Activated CD4-positive, alpha-beta T cell treated with anti-CD3 and anti-CD28 coated beads for 36 hours (primary cell): ENCODE measurements at regions of chr19 and their contacts with region 1.

Region 1: GRCh38 chr19:48993175-48994034 is at the starts of genes GYS1 and RUVBL2:
- DNase-seq: peak; percentile 100
- ATAC-seq: peak; percentile 95
- H3K4me3 Mint-ChIP-seq: peak within 1 kb of the TSS; percentile 100
- H3K27ac Mint-ChIP-seq: peak within 1 kb of the TSS; percentile 97
- H3K4me1 Mint-ChIP-seq: peaks cover 41% of the 10 kb centered on the region
- H3K27me3 Mint-ChIP-seq: no peaks in the 10 kb centered on the region
- total RNA-seq, gene GYS1: 80.2 to 102 TPM
- total RNA-seq, gene RUVBL2: 155 to 178 TPM

Region 2: DNA sequence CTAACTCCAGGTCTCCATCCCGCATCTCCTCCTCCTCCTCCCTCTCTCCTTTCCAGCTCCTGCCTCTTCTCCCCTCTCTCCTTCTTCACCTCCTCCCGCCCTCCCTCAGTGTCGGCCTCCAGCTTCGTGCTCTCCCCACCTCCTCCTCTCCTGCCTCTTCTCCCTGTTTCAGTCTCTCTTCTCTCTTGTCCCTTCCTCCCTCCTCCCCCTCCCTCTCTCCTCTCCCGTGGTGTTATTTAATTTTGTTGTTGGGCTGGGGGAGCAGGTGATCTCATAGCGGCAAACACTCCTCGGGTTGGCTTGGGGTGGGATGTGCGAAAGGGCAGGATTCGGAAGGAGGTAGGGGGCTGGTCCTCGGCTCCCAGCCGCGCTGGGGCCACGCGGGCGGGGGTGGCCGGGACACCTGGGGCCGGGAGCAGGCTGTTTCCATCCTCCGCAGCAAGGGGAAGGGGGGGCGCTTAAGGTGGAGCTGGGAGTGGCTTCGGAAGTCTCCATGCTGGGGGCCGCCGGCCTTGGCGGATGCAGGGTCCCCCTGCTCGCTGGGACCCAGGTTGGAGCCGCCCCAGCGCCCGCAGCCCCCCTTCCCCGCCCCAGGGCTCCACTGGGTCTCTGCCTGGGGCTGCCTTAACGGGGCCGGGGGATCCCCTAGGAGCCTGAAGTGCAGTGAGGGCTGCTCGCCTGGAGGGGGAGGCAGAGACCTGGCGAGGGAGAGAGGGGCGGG is 347.2 kb before region 1 on chr19 and contains the start of gene CA11:
- CTCF ChIA-PET with region 1: interaction called, 3 read pairs
- POLR2A ChIA-PET with region 1: interaction called, 4 read pairs
- intact Hi-C with region 1: loop called in 1 of 2 experiments (anchors 1 kb)
- DNase-seq: peak; percentile 96
- ATAC-seq: peak; percentile 85
- H3K4me3 Mint-ChIP-seq: peak within 1 kb of the TSS; percentile 79
- H3K27ac Mint-ChIP-seq: peak within 1 kb of the TSS; percentile 88
- H3K4me1 Mint-ChIP-seq: peaks cover 44% of the 10 kb centered on the region
- H3K27me3 Mint-ChIP-seq: no peaks in the 10 kb centered on the region
- total RNA-seq, gene CA11: 11.5 to 18.0 TPM

Region 3: GRCh38 chr19:48858984-48859710 is 134.3 kb before region 1 on chr19:
- CTCF ChIA-PET with region 1: no interaction called
- POLR2A ChIA-PET with region 1: no interaction called
- intact Hi-C with region 1: loop called in 1 of 2 experiments (anchors 1 kb)
- DNase-seq: peak; percentile 92
- ATAC-seq: peak; percentile 92
- H3K4me3 Mint-ChIP-seq: peak overlapping the region; percentile 94
- H3K27ac Mint-ChIP-seq: peak overlapping the region; percentile 93
- H3K4me1 Mint-ChIP-seq: peaks cover 7% of the 10 kb centered on the region
- H3K27me3 Mint-ChIP-seq: no peaks in the 10 kb centered on the region

Region 4: GRCh38 chr19:48965040-48965805 is 28.2 kb before region 1 on chr19 and contains the start of gene FTL:
- CTCF ChIA-PET with region 1: interaction called, 31 read pairs
- POLR2A ChIA-PET with region 1: interaction called, 10 read pairs
- intact Hi-C with region 1: loop called (anchors 1 to 2 kb)
- DNase-seq: peak; percentile 95
- ATAC-seq: peak; percentile 79
- H3K4me3 Mint-ChIP-seq: peak within 1 kb of the TSS; percentile 86
- H3K27ac Mint-ChIP-seq: peak within 1 kb of the TSS; percentile 90
- H3K4me1 Mint-ChIP-seq: peaks cover 53% of the 10 kb centered on the region
- H3K27me3 Mint-ChIP-seq: no peaks in the 10 kb centered on the region
- total RNA-seq, gene FTL: 809 to 1,111 TPM

Region 5: DNA sequence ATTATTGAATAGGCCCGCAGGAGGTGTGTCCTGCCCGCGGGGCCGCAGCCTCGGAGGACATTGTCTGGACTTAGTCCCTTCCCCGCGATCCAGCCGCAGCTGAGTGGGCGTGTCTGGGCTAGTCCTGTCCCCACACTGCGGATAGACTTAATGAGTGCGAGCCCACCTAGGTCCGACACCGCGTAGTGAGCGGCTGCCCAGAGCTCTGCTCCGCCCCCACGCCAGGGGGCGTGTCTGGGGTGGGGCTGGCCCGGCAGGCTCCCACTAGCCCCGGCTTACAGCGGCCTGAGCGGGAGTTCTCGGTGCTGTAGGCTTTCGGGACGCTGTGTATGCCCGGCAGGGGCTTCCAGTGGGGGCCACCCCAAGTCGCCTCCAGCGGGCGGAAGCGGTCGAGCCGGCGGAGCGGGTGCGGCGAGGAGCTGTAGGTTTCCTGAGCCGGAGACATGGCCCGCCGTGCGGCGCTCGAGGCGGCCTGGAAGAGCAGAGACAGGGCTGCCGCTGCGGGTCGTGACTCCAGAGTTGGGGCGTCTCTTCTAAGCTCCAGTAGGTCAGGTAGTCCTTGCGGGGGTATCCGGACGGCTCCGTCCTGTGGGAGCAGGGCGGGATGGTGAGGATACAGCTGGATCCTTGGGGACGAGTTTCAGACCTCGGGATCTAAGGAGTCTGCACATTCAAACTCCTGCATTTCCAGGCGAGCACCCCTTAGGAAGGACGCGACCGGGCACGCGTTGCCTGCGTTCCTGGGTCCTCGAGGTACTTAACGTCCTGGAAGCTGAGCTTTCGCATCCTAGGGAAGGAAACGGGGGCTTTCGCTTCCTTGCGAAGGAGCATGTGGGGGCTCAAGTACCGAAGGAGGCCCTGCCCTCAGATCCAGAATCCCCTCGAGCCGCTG is 62.9 kb after region 1 on chr19:
- CTCF ChIA-PET with region 1: interaction called, 11 read pairs
- POLR2A ChIA-PET with region 1: no interaction called
- intact Hi-C with region 1: no loop called
- DNase-seq: peak; percentile 69
- ATAC-seq: peak; percentile 68
- H3K4me3 Mint-ChIP-seq: peak overlapping the region; percentile 56
- H3K27ac Mint-ChIP-seq: no peak overlapping the region
- H3K4me1 Mint-ChIP-seq: peaks cover 20% of the 10 kb centered on the region
- H3K27me3 Mint-ChIP-seq: peaks cover 35% of the 10 kb centered on the region

Region 6: DNA sequence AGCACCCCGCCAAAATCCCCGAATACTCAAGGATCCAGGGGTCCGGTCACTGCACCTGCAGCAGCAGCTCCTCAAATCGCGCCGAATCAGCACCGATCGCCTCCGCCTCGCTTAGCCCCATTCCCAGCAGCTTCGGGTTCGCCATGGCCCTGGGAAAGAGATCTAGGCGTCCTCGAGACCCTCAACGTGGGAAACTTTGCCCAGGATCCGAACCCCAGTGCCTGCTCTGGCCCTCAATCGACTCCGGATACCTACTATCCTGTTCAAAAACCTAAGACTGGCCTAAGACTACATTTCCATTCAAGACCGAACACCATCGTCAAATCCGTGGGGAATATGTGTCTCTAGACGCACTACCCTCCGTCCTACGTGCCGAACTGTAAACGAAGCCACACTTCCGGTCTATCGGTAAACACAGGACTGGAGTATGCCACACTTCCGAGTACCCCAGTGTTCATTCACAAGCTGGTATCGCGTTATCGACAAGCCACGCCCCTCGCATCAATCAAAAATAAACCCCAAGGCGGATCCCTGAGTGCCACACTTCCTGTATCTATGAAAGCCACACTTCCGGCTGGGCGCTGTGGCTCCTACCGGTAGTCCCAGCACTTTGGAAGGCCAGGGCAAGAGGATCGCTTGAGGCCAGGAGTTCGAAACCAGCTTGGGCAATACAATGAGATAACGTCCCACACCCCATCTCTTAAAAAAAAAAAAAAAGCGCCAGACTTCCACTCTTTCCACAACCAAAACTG is 458.2 kb after region 1 on chr19 and contains the start of gene PIH1D1:
- CTCF ChIA-PET with region 1: no interaction called
- POLR2A ChIA-PET with region 1: no interaction called
- intact Hi-C with region 1: loop called in 1 of 2 experiments (anchors 1 kb)
- DNase-seq: peak; percentile 98
- ATAC-seq: peak; percentile 71
- H3K4me3 Mint-ChIP-seq: peak within 1 kb of the TSS; percentile 100
- H3K27ac Mint-ChIP-seq: peak within 1 kb of the TSS; percentile 100
- H3K4me1 Mint-ChIP-seq: peaks cover 50% of the 10 kb centered on the region
- H3K27me3 Mint-ChIP-seq: no peaks in the 10 kb centered on the region
- total RNA-seq, gene PIH1D1: 117 to 138 TPM

Region 7: DNA sequence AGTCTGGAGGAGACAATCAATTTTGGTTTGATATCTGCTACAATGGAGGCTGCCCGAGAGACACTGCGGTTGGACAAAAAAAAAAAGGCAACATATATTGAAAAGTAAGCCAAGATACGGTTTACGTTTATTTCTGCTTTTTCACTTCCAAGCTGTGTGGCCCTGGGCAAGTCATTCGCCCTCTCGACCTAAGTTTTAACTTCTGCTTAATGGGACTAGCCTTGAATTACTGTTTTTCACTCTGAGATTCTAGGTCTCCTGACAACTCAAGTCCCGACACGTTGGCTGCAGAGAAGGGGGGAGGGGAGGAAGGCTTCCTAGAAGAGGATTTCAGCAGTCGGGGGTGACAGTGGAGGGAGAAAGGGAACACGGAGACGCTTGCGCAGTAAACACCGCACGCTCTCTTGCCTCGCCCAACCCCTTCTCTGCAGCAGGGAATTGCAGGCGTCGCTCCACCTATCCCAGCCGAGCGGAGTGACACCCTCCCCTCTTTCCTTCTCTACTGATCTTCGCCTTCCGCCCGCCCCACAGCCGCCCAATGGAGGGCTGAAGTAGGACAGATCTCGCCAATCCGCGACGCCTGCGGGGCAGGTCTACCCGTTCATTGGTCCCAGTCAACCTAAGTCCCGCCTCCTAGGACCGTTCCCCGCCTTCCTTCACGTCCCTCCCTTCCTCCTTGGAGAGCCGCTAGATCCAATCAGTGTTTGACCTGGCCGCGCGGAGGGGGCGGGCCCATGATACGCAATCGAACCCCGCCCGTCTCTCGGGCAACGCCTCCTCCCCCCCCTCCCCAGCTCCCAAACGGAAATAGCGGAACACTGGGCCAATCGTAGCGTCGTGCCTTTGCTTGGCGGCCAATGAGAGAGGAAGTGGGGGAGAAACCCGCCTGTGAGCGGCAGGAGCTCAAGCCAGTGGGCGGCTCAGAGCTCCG is 772.9 kb after region 1 on chr19:
- CTCF ChIA-PET with region 1: no interaction called
- POLR2A ChIA-PET with region 1: no interaction called
- intact Hi-C with region 1: loop called in 1 of 2 experiments (anchors 1 kb)
- DNase-seq: peak; percentile 99
- ATAC-seq: peak; percentile 93
- H3K4me3 Mint-ChIP-seq: peak overlapping the region; percentile 94
- H3K27ac Mint-ChIP-seq: peak overlapping the region; percentile 93
- H3K4me1 Mint-ChIP-seq: peaks cover 36% of the 10 kb centered on the region
- H3K27me3 Mint-ChIP-seq: no peaks in the 10 kb centered on the region

Region 8: DNA sequence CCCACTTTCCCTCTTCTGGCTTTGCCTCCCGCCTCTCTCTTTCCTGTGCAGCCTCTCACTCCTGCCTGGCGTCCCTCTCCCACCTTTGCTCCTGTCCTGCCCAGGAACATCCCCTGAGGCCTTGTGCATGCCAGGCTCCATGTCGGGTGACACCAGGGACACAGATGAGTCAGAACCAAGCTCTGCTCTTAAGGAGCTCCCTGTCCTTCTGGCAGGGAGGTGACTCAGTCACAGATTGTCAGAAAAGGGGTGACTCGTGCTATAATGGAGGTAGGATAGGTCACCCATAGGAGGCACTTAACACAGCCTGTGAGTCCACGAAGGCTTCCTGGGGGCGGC is 800.0 kb after region 1 on chr19:
- CTCF ChIA-PET with region 1: no interaction called
- POLR2A ChIA-PET with region 1: no interaction called
- intact Hi-C with region 1: no loop called
- DNase-seq: peak; percentile 57
- ATAC-seq: peak; percentile 100
- H3K4me3 Mint-ChIP-seq: no peak overlapping the region
- H3K27ac Mint-ChIP-seq: no peak overlapping the region
- H3K4me1 Mint-ChIP-seq: peaks cover 5% of the 10 kb centered on the region
- H3K27me3 Mint-ChIP-seq: no peaks in the 10 kb centered on the region